Right cardiac atrium (tissue), 5 donors: ENCODE measurements at regions of chr2 and their contacts with region 1.

Region 1: GRCh38 chr2:189674374-189675112 is at the start of gene ANKAR:
- DNase-seq: peak; percentile 94 to 98 (median 97)
- ATAC-seq: peak; percentile 99 to 100
- H3K4me3 ChIP-seq: peak within 1 kb of the TSS; percentile 60
- H3K27ac ChIP-seq: peak within 1 kb of the TSS; percentile 80
- H3K4me1 ChIP-seq: no peaks in the 10 kb centered on the region
- H3K27me3 ChIP-seq: no peaks in the 10 kb centered on the region
- total RNA-seq, gene ANKAR: 9.2 to 12.0 (median 11.0) TPM

Region 2: GRCh38 chr2:189770590-189771322 is 96.2 kb after region 1 on chr2:
- intact Hi-C with region 1: loop called in 1 of 4 experiments (anchors 10 kb)
- DNase-seq: no peak
- ATAC-seq: no peak
- H3K4me3 ChIP-seq: no peak overlapping the region
- H3K27ac ChIP-seq: no peak overlapping the region
- H3K4me1 ChIP-seq: no peaks in the 10 kb centered on the region
- H3K27me3 ChIP-seq: no peaks in the 10 kb centered on the region